ENCODE measurements at regions of chr1 and their contacts with region 1.

Region 1: GRCh38 chr1:167715157-167715999 is 6.4 kb upstream of the MPZL1 start:
- DNase-seq: peak; percentile 66 to 91 (median 89)
- ATAC-seq: peak; percentile 81
- H3K4me3 ChIP-seq: peak overlapping the region; percentile 88
- H3K4me3 Mint-ChIP-seq: peak overlapping the region; percentile 89 to 98 (median 93)
- H3K27ac ChIP-seq: peak overlapping the region; percentile 48
- H3K27ac Mint-ChIP-seq: peak overlapping the region; percentile 87 to 100 (median 98)
- H3K4me1 ChIP-seq: peaks cover 4 to 13% of the 10 kb centered on the region in 2 donors
- H3K4me1 Mint-ChIP-seq: peaks cover 26 to 53% (median 45%) of the 10 kb centered on the region in 7 donors
- H3K27me3 ChIP-seq: no peaks in the 10 kb centered on the region
- H3K27me3 Mint-ChIP-seq: peaks cover 0 to 16% (median 0%) of the 10 kb centered on the region in 5 donors

Region 2: DNA sequence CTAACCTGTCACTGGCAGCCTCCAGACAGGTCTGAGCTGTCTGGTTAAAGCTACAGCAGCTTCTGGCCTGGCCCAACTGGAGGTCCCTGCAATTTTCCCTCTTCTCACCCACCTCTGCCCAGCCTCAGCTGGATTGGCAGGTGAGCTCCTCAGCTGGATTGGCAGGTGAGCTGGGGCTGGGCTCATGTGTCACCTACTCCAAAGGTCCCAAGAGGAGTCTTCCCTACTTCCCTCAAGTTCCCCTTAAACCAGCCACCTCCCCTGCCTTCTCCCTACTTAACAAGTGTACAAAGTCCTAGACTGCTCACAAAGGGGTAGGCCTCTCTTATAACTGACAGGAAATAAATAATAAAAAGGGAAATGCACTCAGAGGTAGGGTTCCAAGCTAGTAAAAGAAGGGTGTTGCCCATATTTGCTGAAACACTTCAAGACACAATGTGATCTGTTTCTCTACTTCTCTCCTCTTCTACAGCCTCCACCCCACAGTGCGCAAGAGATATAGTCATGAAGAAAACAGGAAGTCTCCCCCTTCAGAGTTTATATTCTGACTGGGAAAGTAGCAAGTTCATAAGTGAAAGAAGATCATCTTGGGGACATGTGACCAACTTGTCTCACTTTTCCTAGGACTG is 625.0 kb before region 1 on chr1 and contains the start of gene GPA33:
- CTCF ChIA-PET with region 1: no interaction called
- POLR2A ChIA-PET with region 1: no interaction called
- intact Hi-C with region 1: loop called in 1 of 2 experiments (anchors 10 kb)
- DNase-seq: peak in 7 of 9 donors; percentile 71 to 89 (median 83)
- ATAC-seq: peak; percentile 95
- H3K4me3 ChIP-seq: peak within 1 kb of the TSS; percentile 45
- H3K4me3 Mint-ChIP-seq: peak within 1 kb of the TSS in 9 of 10 donors; percentile 63 to 93 (median 86)
- H3K27ac ChIP-seq: peak within 1 kb of the TSS; percentile 83
- H3K27ac Mint-ChIP-seq: peak within 1 kb of the TSS; percentile 95 to 100 (median 100)
- H3K4me1 ChIP-seq: peaks cover 25 to 33% of the 10 kb centered on the region in 2 donors
- H3K4me1 Mint-ChIP-seq: peaks cover 18 to 80% (median 34%) of the 10 kb centered on the region in 7 donors
- H3K27me3 ChIP-seq: no peaks in the 10 kb centered on the region
- H3K27me3 Mint-ChIP-seq: no peaks in the 10 kb centered on the region
- total RNA-seq, gene GPA33: 5.4 to 32.6 (median 11.3) TPM

Region 3: GRCh38 chr1:167533851-167534300 is 181.5 kb before region 1 on chr1:
- CTCF ChIA-PET with region 1: no interaction called
- POLR2A ChIA-PET with region 1: no interaction called
- intact Hi-C with region 1: no loop called
- DNase-seq: peak in 8 of 9 donors; percentile 50 to 72 (median 58)
- ATAC-seq: peak; percentile 87
- H3K4me3 ChIP-seq: no peak overlapping the region
- H3K4me3 Mint-ChIP-seq: no peak overlapping the region
- H3K27ac ChIP-seq: no peak overlapping the region
- H3K27ac Mint-ChIP-seq: peak overlapping the region in 1 of 9 donors; percentile 30
- H3K4me1 ChIP-seq: no peaks in the 10 kb centered on the region
- H3K4me1 Mint-ChIP-seq: peaks cover 0 to 11% (median 2%) of the 10 kb centered on the region in 7 donors
- H3K27me3 ChIP-seq: no peaks in the 10 kb centered on the region
- H3K27me3 Mint-ChIP-seq: peaks cover 0 to 3% (median 0%) of the 10 kb centered on the region in 5 donors

Region 4: DNA sequence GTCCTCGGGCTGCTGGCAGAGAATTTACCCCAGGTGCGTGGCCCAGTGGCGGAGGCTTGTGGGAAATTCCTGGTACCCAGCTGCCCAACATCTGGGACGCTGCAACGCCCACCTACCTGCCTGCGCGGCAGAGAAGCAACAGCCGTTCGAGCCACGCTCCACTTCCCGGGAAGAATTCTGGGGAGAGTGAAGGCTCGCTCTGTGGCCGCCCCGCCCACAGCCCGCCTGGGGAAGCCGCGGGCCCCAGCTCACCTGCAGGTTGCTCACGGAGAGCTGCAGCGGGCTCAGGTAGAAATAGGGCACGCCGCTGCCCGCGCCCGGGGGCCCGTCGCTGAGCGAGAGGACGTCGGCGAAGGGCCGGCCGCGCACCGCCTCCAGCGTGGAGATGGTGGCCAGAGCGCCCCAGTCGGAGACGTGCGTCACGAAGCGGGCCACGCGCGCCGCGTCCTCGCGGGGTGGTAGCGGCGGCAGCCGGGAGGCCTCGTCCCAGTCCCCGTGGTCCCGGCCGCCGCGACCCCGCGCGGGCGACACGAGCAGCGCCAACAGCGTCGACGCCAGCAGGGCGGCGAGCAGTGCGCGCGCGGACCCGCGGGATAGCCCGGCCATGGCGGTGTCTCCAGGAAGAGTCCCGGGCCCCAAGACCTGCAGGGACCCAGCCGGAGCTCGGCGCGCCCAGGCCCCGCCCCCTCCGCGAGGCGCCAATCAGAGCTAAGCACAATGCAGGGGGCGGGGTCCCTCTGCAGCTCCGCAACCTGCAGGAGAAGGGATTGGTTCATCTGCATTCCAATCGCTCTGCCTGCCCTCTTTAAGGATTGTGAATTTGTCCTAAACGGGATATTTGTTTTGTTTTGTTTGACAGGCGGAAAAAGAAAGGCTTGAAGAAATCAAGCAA is 162.0 kb before region 1 on chr1 and contains the start of gene CREG1:
- CTCF ChIA-PET with region 1: interaction called, 7 read pairs
- POLR2A ChIA-PET with region 1: interaction called, 4 read pairs
- intact Hi-C with region 1: loop called in 1 of 2 experiments (anchors 1 kb)
- DNase-seq: peak; percentile 82 to 92 (median 88)
- ATAC-seq: peak; percentile 98
- H3K4me3 ChIP-seq: peak within 1 kb of the TSS; percentile 71
- H3K4me3 Mint-ChIP-seq: peak within 1 kb of the TSS; percentile 85 to 97 (median 92)
- H3K27ac ChIP-seq: peak within 1 kb of the TSS; percentile 72
- H3K27ac Mint-ChIP-seq: peak within 1 kb of the TSS; percentile 43 to 88 (median 80)
- H3K4me1 ChIP-seq: peaks cover 19% of the 10 kb centered on the region in 2 donors
- H3K4me1 Mint-ChIP-seq: peaks cover 35 to 58% (median 46%) of the 10 kb centered on the region in 7 donors
- H3K27me3 ChIP-seq: no peaks in the 10 kb centered on the region
- H3K27me3 Mint-ChIP-seq: peaks cover 0 to 4% (median 0%) of the 10 kb centered on the region in 5 donors
- total RNA-seq, gene CREG1: 10.6 to 33.4 (median 23.1) TPM

Region 5: DNA sequence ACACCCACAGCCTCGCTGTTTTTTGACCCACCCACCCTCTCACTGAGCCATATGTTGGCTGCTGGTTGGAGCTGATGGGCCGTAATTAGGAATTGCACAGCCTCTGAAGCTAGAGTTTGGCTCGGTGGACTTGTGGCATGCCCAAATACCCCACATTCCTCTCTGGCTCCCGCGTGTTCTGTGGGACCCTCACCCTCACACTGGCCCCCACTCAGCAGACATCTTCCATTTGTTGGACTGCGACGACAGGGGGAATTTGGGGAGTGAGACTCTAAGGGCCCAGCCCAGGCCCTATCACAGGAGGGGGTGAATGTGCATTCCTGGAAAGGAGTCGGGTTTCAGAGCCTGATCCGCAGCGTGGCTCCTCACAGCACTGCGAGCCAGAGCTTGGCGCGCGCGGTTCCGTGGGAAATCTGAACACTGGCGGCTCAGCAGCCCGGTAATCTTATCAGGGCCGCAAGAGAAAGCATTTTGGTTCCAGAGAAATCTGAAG is 80.2 kb before region 1 on chr1:
- CTCF ChIA-PET with region 1: interaction called, 12 read pairs
- POLR2A ChIA-PET with region 1: interaction called, 9 read pairs
- intact Hi-C with region 1: loop called in 1 of 2 experiments (anchors 2 kb)
- DNase-seq: no peak
- ATAC-seq: no peak
- H3K4me3 ChIP-seq: no peak overlapping the region
- H3K4me3 Mint-ChIP-seq: peak overlapping the region in 7 of 10 donors; percentile 23 to 99 (median 85)
- H3K27ac ChIP-seq: peak overlapping the region; percentile 61
- H3K27ac Mint-ChIP-seq: peak overlapping the region in 8 of 9 donors; percentile 53 to 95 (median 86)
- H3K4me1 ChIP-seq: peaks cover 67 to 76% of the 10 kb centered on the region in 2 donors
- H3K4me1 Mint-ChIP-seq: peaks cover 71 to 90% (median 82%) of the 10 kb centered on the region in 7 donors
- H3K27me3 ChIP-seq: no peaks in the 10 kb centered on the region
- H3K27me3 Mint-ChIP-seq: no peaks in the 10 kb centered on the region

Region 6: DNA sequence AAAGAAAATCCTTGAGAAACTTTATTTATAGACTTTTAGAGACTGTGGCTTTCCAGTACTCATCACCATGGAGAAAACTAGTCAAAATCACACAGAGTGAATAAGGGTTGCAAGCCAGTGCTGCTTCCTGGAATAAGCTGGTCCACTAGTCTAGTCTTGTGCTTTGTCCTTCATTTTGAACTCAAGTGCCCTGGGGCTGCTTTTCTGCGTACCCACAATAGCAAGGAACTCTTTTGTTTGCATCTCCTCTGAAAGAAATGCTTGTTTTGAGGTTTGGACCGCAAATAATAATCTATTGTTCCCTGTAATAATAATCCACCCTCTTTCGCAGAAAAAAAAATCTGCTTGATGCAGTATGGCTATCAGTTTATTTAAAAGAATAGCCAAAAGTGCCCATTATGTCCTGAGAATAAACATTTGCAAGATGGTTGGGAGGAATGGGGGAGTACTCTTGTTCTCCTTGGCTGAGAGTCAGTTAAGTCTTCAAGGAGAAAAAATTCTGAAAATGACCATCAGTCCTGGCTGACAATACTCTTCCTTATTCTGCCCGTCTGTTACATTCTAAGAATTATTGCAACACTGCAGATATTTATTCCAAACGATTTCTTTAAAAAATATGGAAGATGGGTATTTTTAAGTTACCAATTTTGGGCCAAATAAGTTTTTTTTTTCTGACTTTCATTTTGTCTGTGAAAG is 48.3 kb after region 1 on chr1:
- CTCF ChIA-PET with region 1: interaction called, 3 read pairs
- POLR2A ChIA-PET with region 1: no interaction called
- intact Hi-C with region 1: loop called (anchors 2 to 5 kb)
- DNase-seq: no peak
- ATAC-seq: no peak
- H3K4me3 ChIP-seq: no peak overlapping the region
- H3K4me3 Mint-ChIP-seq: no peak overlapping the region
- H3K27ac ChIP-seq: no peak overlapping the region
- H3K27ac Mint-ChIP-seq: no peak overlapping the region
- H3K4me1 ChIP-seq: peaks cover 0 to 17% of the 10 kb centered on the region in 2 donors
- H3K4me1 Mint-ChIP-seq: peaks cover 24 to 41% (median 27%) of the 10 kb centered on the region in 7 donors
- H3K27me3 ChIP-seq: no peaks in the 10 kb centered on the region
- H3K27me3 Mint-ChIP-seq: no peaks in the 10 kb centered on the region

Region 7: DNA sequence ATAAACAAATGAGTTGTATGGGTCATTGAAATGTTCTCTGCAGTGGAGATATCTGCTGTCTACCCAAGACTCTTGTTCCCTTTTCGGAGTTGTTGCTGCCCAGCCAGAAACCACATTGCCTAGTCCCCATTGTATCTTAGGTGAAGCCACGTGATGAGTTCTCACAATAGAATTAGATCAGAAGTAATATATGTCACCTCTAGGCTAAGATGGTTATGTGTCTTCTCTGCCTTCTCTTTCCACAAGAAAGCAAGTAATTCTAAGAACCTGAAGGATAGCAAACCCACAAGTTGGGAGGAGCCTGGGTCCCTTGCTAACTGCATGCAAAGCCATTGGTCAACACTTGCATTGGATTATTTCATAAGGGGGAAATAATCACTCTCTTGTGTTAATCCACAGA is 121.9 kb after region 1 on chr1:
- CTCF ChIA-PET with region 1: no interaction called
- POLR2A ChIA-PET with region 1: no interaction called
- intact Hi-C with region 1: no loop called
- DNase-seq: no peak
- ATAC-seq: no peak
- H3K4me3 ChIP-seq: no peak overlapping the region
- H3K4me3 Mint-ChIP-seq: no peak overlapping the region
- H3K27ac ChIP-seq: no peak overlapping the region
- H3K27ac Mint-ChIP-seq: no peak overlapping the region
- H3K4me1 ChIP-seq: no peaks in the 10 kb centered on the region
- H3K4me1 Mint-ChIP-seq: peaks cover 0 to 7% (median 0%) of the 10 kb centered on the region in 7 donors
- H3K27me3 ChIP-seq: no peaks in the 10 kb centered on the region
- H3K27me3 Mint-ChIP-seq: peaks cover 0 to 16% (median 3%) of the 10 kb centered on the region in 5 donors

Region 8: DNA sequence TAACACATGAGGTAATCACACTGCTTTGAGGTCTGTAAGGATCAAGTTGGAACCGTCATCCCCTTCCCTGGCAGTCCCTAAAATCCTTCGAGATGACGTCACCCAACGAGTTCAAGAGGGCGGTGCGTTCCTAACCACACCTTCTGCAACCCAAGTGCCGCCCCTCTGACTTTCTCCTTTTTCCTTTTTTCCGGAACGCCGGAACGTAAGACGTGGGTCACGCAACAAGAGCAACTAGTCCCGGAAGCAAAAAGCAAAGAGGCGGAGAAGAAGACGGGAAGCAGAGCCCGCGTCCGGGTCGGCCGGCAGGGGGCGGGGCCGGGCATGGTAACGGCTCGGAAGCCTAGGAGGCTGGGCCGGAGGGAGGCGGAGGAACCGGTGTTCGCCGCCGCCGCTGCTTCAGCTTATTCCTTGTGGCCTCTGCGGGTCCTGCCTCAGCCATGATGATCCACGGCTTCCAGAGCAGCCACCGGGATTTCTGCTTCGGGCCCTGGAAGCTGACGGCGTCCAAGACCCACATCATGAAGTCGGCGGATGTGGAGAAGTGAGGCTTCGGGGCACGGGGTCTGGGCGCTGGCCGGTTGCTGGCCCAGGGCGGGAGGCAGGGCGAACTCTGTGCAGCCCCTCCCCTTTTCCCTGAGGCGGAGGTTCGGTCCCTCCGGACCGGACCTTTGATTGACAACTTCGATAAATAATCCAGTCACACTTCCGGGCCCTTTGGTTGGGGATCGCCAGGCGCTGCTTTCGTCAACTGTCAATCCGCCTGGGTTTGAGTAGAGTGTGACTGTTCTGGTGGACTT is 463.5 kb after region 1 on chr1 and contains the start of gene TIPRL:
- CTCF ChIA-PET with region 1: no interaction called
- POLR2A ChIA-PET with region 1: no interaction called
- intact Hi-C with region 1: loop called (anchors 2 to 5 kb)
- DNase-seq: peak; percentile 88 to 94 (median 93)
- ATAC-seq: peak; percentile 95
- H3K4me3 ChIP-seq: peak within 1 kb of the TSS; percentile 80
- H3K4me3 Mint-ChIP-seq: no peak within 1 kb of the TSS
- H3K27ac ChIP-seq: peak within 1 kb of the TSS; percentile 96
- H3K27ac Mint-ChIP-seq: no peak within 1 kb of the TSS
- H3K4me1 ChIP-seq: peaks cover 14 to 16% of the 10 kb centered on the region in 2 donors
- H3K4me1 Mint-ChIP-seq: peaks cover 3 to 20% (median 9%) of the 10 kb centered on the region in 7 donors
- H3K27me3 ChIP-seq: no peaks in the 10 kb centered on the region
- H3K27me3 Mint-ChIP-seq: peaks cover 2 to 9% (median 2%) of the 10 kb centered on the region in 5 donors
- total RNA-seq, gene TIPRL: 17.2 to 41.2 (median 23.5) TPM

Region 9: DNA sequence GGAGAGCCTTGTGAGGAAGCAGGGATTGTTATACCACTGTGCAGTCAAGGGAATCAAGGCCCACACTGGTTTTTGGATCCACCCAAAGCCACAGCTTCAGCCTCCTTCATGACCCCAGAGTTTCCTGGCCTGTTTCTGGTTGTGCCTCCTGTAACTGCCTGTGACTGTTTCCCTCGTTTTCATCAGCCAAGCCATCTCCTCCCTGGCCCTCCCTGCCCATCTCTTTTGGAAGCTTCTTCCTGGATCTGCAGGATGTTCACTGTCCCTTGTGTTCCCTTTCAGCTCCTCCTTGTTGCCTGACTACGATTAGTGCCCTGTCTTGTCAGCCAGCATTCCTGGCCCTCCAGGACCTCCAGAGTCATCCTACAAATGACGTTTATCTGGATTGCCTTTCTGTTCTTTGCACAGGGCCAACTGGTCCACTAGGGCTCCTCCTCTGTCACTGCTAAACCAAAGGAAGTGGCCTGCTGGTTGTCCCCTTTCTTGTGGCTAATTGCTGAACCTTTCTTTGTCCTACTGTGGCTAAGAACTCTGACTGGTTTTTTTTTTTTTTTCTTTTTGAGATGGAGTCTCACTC is 528.3 kb after region 1 on chr1:
- CTCF ChIA-PET with region 1: no interaction called
- POLR2A ChIA-PET with region 1: no interaction called
- intact Hi-C with region 1: no loop called
- DNase-seq: no peak
- ATAC-seq: no peak
- H3K4me3 ChIP-seq: no peak overlapping the region
- H3K4me3 Mint-ChIP-seq: peak overlapping the region in 1 of 10 donors; percentile 57
- H3K27ac ChIP-seq: no peak overlapping the region
- H3K27ac Mint-ChIP-seq: peak overlapping the region in 2 of 9 donors; percentile 77 to 91
- H3K4me1 ChIP-seq: no peaks in the 10 kb centered on the region
- H3K4me1 Mint-ChIP-seq: peaks cover 15 to 48% (median 40%) of the 10 kb centered on the region in 7 donors
- H3K27me3 ChIP-seq: no peaks in the 10 kb centered on the region
- H3K27me3 Mint-ChIP-seq: no peaks in the 10 kb centered on the region